ENCODE measurements at regions of chr11 and their contacts with region 1.

Region 1: DNA sequence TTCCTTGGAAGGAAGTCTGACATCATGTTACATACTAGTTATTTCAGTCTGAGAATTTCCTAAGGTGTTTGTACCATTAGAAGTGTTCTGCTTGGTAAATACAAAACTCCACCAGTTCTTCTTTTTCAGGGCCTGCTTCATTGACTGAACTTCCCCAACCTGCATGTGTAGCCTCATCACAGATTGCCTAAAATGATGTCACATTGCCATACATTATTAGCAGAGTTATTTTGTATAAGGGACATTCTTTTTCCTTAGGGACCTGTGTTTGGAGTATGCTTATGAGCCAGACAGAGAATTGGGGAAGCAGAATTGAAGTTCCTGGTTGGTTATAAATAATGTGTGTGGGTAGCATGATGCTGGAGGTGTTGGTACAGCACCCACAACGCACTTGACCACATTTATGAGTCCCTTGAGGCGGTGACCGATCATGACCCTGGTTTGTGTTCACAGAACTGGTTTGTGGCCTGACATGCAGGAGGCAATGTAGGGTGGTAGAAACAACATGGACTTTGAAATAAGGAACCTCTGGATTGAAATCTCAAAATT is 16.4 kb upstream of the MMP7 start:
- DNase-seq: peak; percentile 93
- ATAC-seq: peak; percentile 81
- H3K4me3 ChIP-seq: no peak overlapping the region
- H3K27ac ChIP-seq: peak overlapping the region; percentile 68; the same call in 1 of the 2 replicates
- H3K4me1 ChIP-seq: peaks cover 37% of the 10 kb centered on the region
- H3K27me3 ChIP-seq: no peaks in the 10 kb centered on the region
- CTCF ChIP-seq: peak in 1 of 3 experiments; percentile 3; a peak in 1 of 6 replicates
- EP300 ChIP-seq: peak; percentile 93 to 95; a peak in 3 of 4 replicates
- POLR2A ChIP-seq: no peak
- RAD21 ChIP-seq: peak; percentile 32; the same call in 1 of the 2 replicates

Region 2: GRCh38 chr11:101835506-101836063 is 711.4 kb before region 1 on chr11:
- CTCF ChIA-PET with region 1: no interaction called
- POLR2A ChIA-PET with region 1: no interaction called
- RAD21 ChIA-PET with region 1: no interaction called
- SMC1A ChIA-PET with region 1: no interaction called
- in situ Hi-C with region 1: no loop called
- intact Hi-C with region 1: no loop called
- DNase-seq: no peak
- ATAC-seq: no peak
- H3K4me3 ChIP-seq: no peak overlapping the region
- H3K27ac ChIP-seq: no peak overlapping the region
- H3K4me1 ChIP-seq: no peaks in the 10 kb centered on the region
- H3K27me3 ChIP-seq: no peaks in the 10 kb centered on the region
- CTCF ChIP-seq: no peak
- EP300 ChIP-seq: no peak
- POLR2A ChIP-seq: no peak
- RAD21 ChIP-seq: no peak

Region 3: DNA sequence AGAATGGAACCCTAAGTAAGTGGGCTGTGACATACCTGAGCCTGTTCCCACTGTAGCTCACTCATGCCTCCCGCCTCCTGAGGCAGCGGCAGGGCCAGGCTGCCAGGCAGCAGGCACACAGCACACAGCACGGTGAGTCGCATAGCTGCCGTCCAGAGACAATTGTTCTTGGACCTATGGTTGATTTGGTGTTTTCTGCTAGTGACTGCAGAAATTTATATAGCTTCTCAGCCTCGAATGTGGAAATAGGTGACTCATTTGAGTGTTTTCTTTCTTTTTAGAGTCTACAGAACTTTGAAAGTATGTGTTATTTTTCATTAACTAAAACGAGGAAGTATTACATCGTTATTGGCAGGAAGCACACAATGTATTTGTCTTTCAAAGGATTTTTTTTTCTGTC is 16.4 kb before region 1 on chr11 and contains the start of gene MMP7:
- CTCF ChIA-PET with region 1: interaction called, 7 read pairs
- POLR2A ChIA-PET with region 1: interaction called, 8 read pairs
- RAD21 ChIA-PET with region 1: interaction called, 6 read pairs
- SMC1A ChIA-PET with region 1: interaction called, 43 read pairs
- in situ Hi-C with region 1: no loop called
- intact Hi-C with region 1: no loop called
- DNase-seq: no peak
- ATAC-seq: peak; percentile 71
- H3K4me3 ChIP-seq: no peak within 1 kb of the TSS
- H3K27ac ChIP-seq: no peak within 1 kb of the TSS
- H3K4me1 ChIP-seq: no peaks in the 10 kb centered on the region
- H3K27me3 ChIP-seq: no peaks in the 10 kb centered on the region
- CTCF ChIP-seq: no peak
- EP300 ChIP-seq: 0 out of 4 replicates have a peak, but pooled peaks of 1 of the 2 experiments have one; percentile 9
- POLR2A ChIP-seq: no peak
- RAD21 ChIP-seq: no peak
- polyA plus RNA-seq, gene MMP7: 1.6 to 1.7 TPM

Region 4: GRCh38 chr11:102577182-102577581 is 30.2 kb after region 1 on chr11:
- CTCF ChIA-PET with region 1: interaction called, 4 read pairs
- POLR2A ChIA-PET with region 1: interaction called, 59 read pairs
- RAD21 ChIA-PET with region 1: interaction called, 102 read pairs
- SMC1A ChIA-PET with region 1: interaction called, 322 read pairs
- in situ Hi-C with region 1: no loop called
- intact Hi-C with region 1: loop called (anchors 1 kb)
- DNase-seq: no peak
- ATAC-seq: peak; percentile 38
- H3K4me3 ChIP-seq: no peak overlapping the region
- H3K27ac ChIP-seq: no peak overlapping the region
- H3K4me1 ChIP-seq: peaks cover 12% of the 10 kb centered on the region; the same call in 1 of the 2 replicates
- H3K27me3 ChIP-seq: no peaks in the 10 kb centered on the region
- CTCF ChIP-seq: no peak
- EP300 ChIP-seq: no peak
- POLR2A ChIP-seq: no peak
- RAD21 ChIP-seq: no peak

Region 5: DNA sequence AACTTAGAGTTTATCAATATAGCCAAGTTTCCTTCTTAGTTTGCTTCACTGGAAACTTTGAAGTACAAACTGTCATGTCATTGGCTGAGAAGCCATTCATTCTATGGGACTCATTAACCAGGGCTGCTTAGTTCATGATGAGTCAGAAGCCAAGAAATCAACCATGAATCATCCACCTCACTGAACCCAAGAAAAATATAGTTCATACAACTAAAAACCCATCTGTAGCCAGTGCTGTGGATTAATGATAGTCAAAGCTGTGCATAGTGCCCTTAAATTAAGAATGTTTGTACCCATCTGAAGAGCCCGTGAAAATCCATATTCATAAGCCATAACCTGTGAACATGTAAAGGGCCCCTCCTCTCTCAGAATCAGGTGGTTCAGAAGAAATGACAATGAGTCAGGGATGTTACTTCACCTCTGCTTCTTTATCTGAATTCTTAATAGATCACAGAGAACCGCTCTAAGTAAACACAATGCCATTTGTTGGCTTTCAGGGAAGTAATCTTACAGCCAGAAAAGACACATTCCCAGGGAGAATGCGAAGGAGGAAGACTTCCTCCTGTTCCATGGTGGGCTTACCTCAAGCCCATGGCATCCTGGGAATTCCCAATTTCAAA is 52.8 kb after region 1 on chr11:
- CTCF ChIA-PET with region 1: interaction called, 10 read pairs
- POLR2A ChIA-PET with region 1: interaction called, 19 read pairs
- RAD21 ChIA-PET with region 1: interaction called, 47 read pairs
- SMC1A ChIA-PET with region 1: interaction called, 399 read pairs
- in situ Hi-C with region 1: no loop called
- intact Hi-C with region 1: loop called (anchors 2 kb)
- DNase-seq: no peak
- ATAC-seq: peak; percentile 94
- H3K4me3 ChIP-seq: no peak overlapping the region
- H3K27ac ChIP-seq: 0 out of 2 replicates have a peak overlapping the region, but pooled peaks have one; percentile 16
- H3K4me1 ChIP-seq: peaks cover 3% of the 10 kb centered on the region; the same call in 1 of the 2 replicates
- H3K27me3 ChIP-seq: no peaks in the 10 kb centered on the region
- CTCF ChIP-seq: no peak
- EP300 ChIP-seq: peak; percentile 35 to 50; a peak in 3 of 4 replicates
- POLR2A ChIP-seq: no peak
- RAD21 ChIP-seq: no peak

Region 6: GRCh38 chr11:102647430-102647829 is 100.4 kb after region 1 on chr11:
- CTCF ChIA-PET with region 1: no interaction called
- POLR2A ChIA-PET with region 1: no interaction called
- RAD21 ChIA-PET with region 1: no interaction called
- SMC1A ChIA-PET with region 1: no interaction called
- in situ Hi-C with region 1: no loop called
- intact Hi-C with region 1: no loop called
- DNase-seq: no peak
- ATAC-seq: no peak
- H3K4me3 ChIP-seq: no peak overlapping the region
- H3K27ac ChIP-seq: no peak overlapping the region
- H3K4me1 ChIP-seq: no peaks in the 10 kb centered on the region
- H3K27me3 ChIP-seq: no peaks in the 10 kb centered on the region
- CTCF ChIP-seq: no peak
- EP300 ChIP-seq: no peak
- POLR2A ChIP-seq: no peak
- RAD21 ChIP-seq: no peak